ENCODE measurements at regions of chr1 and their contacts with region 1.

Region 1: DNA sequence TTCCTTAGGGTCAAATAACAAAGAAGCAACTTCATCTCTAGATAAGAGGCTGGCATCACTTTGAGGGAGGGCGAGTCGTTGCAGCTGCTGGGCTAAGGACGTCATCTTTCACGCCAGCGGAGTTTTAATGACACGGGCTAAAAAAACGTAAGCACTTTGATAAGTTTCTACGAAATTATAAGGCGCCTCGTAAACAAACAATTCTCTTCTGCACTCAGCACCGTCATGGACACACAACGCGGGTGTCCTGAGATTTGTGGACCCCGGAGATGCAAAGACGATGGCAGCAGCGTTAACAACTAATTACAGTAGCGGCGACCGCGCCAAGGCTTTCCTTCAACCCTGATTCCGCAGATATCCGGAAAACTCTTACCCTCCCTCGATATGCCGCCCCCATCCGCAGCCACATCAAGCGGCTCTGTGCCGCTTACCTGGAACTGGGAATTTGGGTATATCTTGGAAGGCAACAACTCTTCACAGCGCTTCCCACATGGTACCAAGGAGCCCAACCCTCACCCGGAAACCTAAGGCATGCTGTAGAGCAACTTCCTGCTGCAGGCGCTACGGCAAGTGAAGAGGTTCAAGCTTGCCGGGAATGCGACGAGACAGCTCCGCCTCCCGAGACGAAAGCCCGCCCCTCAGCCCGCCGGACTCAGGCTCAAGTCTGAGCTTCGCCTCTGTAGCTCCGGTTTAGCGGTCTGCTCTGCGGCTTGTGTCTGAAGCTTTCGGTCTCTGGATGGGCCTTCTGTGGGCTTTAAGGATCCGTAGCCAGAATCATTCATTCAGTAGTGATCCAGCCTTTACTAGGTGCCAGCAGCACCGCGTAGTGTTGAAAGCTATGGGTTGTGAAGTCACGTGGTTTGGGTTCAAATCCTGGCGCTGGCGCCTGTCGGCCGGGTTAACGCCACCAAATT is at the start of gene HEATR1:
- DNase-seq: peak; percentile 92
- ATAC-seq: peak; percentile 97
- H3K4me3 ChIP-seq: peak within 1 kb of the TSS; percentile 77 to 99 (median 80)
- H3K4me3 Mint-ChIP-seq: peak within 1 kb of the TSS; percentile 99
- H3K27ac ChIP-seq: peak within 1 kb of the TSS; percentile 26 to 47
- H3K27ac Mint-ChIP-seq: peak within 1 kb of the TSS; percentile 97
- H3K4me1 ChIP-seq: peaks cover 15 to 16% of the 10 kb centered on the region in 2 donors
- H3K4me1 Mint-ChIP-seq: peaks cover 32% of the 10 kb centered on the region
- H3K27me3 ChIP-seq: peaks cover 0 to 9% (median 4%) of the 10 kb centered on the region in 4 experiments
- H3K27me3 Mint-ChIP-seq: peaks cover 11% of the 10 kb centered on the region
- CTCF ChIP-seq: no peak
- total RNA-seq, gene HEATR1: 50.6 and 56.0 TPM in 2 replicates

Region 2: GRCh38 chr1:236523701-236524141 is 80.5 kb before region 1 on chr1 and contains the start of gene LGALS8:
- CTCF ChIA-PET with region 1: no interaction called
- POLR2A ChIA-PET with region 1: no interaction called
- intact Hi-C with region 1: loop called (anchors 1 kb)
- DNase-seq: peak; percentile 87
- ATAC-seq: peak; percentile 64
- H3K4me3 ChIP-seq: peak within 1 kb of the TSS; percentile 70 to 99 (median 96)
- H3K4me3 Mint-ChIP-seq: peak within 1 kb of the TSS; percentile 99
- H3K27ac ChIP-seq: peak within 1 kb of the TSS; percentile 78
- H3K27ac Mint-ChIP-seq: peak within 1 kb of the TSS; percentile 97
- H3K4me1 ChIP-seq: peaks cover 8 to 9% of the 10 kb centered on the region in 2 donors
- H3K4me1 Mint-ChIP-seq: peaks cover 16% of the 10 kb centered on the region
- H3K27me3 ChIP-seq: no peaks in the 10 kb centered on the region
- H3K27me3 Mint-ChIP-seq: no peaks in the 10 kb centered on the region
- CTCF ChIP-seq: no peak
- total RNA-seq, gene LGALS8: 64.9 and 67.0 TPM in 2 replicates

Region 3: GRCh38 chr1:236786453-236786852 is 182.2 kb after region 1 on chr1:
- CTCF ChIA-PET with region 1: no interaction called
- POLR2A ChIA-PET with region 1: no interaction called
- intact Hi-C with region 1: no loop called
- DNase-seq: no peak
- ATAC-seq: no peak
- H3K4me3 ChIP-seq: no peak overlapping the region
- H3K4me3 Mint-ChIP-seq: no peak overlapping the region
- H3K27ac ChIP-seq: no peak overlapping the region
- H3K27ac Mint-ChIP-seq: no peak overlapping the region
- H3K4me1 ChIP-seq: no peaks in the 10 kb centered on the region
- H3K4me1 Mint-ChIP-seq: no peaks in the 10 kb centered on the region
- H3K27me3 ChIP-seq: peaks cover 0 to 6% (median 0%) of the 10 kb centered on the region in 4 experiments
- H3K27me3 Mint-ChIP-seq: peaks cover 20% of the 10 kb centered on the region
- CTCF ChIP-seq: no peak

Region 4: DNA sequence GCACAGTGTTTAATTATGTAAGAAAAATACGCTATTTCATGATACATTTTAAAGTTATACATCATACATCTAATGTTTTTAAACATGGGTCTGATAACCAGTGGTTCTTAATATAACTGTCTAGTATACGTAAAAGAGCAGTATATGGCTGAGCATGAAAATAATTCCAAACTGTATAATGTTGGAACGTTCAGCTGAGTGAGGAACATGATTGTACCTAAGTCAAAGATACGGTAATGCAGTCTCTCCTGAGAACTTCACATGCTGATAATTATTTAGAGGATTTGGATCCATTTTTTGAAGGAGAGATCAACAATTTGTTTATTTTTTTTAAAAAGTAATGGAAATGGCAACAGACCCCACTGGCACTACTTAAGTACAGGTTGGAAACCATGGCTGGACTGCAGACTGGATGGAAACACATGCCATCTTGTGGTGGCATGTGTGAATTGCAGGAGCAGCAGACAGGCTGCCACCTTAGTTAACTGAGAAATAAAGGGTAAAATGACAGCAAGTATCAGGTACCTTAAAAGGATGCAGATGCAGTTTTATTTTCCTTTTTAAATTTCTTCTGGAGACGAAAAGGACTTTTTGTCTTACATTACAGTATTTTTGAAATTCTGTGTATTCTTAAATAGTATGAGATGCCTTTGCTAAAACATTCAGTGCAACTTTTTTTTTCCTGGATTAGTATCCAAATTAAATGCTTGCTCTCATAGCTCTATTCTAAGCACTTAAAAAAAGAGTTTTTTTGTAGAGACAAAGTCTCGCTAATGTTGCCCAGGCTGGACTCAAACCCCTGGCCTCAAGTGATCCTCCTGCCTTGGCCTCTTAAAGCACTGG is 264.6 kb after region 1 on chr1:
- CTCF ChIA-PET with region 1: no interaction called
- POLR2A ChIA-PET with region 1: no interaction called
- intact Hi-C with region 1: loop called (anchors 5 kb)
- DNase-seq: peak; percentile 60
- ATAC-seq: peak; percentile 24
- H3K4me3 ChIP-seq: no peak overlapping the region
- H3K4me3 Mint-ChIP-seq: no peak overlapping the region
- H3K27ac ChIP-seq: no peak overlapping the region
- H3K27ac Mint-ChIP-seq: no peak overlapping the region
- H3K4me1 ChIP-seq: no peaks in the 10 kb centered on the region
- H3K4me1 Mint-ChIP-seq: no peaks in the 10 kb centered on the region
- H3K27me3 ChIP-seq: no peaks in the 10 kb centered on the region
- H3K27me3 Mint-ChIP-seq: no peaks in the 10 kb centered on the region
- CTCF ChIP-seq: peak; percentile 94

Region 5: GRCh38 chr1:237562242-237562823 is 958.1 kb after region 1 on chr1:
- CTCF ChIA-PET with region 1: no interaction called
- POLR2A ChIA-PET with region 1: no interaction called
- intact Hi-C with region 1: loop called (anchors 5 kb)
- DNase-seq: peak; percentile 50
- ATAC-seq: no peak
- H3K4me3 ChIP-seq: no peak overlapping the region
- H3K4me3 Mint-ChIP-seq: no peak overlapping the region
- H3K27ac ChIP-seq: no peak overlapping the region
- H3K27ac Mint-ChIP-seq: no peak overlapping the region
- H3K4me1 ChIP-seq: no peaks in the 10 kb centered on the region
- H3K4me1 Mint-ChIP-seq: no peaks in the 10 kb centered on the region
- H3K27me3 ChIP-seq: no peaks in the 10 kb centered on the region
- H3K27me3 Mint-ChIP-seq: no peaks in the 10 kb centered on the region
- CTCF ChIP-seq: peak; percentile 84